Activated CD4-positive, alpha-beta memory T cell treated with anti-CD3 and anti-CD28 coated beads for 36 hours (primary cell): ENCODE measurements at regions of chr6 and their contacts with region 1.

Region 1: DNA sequence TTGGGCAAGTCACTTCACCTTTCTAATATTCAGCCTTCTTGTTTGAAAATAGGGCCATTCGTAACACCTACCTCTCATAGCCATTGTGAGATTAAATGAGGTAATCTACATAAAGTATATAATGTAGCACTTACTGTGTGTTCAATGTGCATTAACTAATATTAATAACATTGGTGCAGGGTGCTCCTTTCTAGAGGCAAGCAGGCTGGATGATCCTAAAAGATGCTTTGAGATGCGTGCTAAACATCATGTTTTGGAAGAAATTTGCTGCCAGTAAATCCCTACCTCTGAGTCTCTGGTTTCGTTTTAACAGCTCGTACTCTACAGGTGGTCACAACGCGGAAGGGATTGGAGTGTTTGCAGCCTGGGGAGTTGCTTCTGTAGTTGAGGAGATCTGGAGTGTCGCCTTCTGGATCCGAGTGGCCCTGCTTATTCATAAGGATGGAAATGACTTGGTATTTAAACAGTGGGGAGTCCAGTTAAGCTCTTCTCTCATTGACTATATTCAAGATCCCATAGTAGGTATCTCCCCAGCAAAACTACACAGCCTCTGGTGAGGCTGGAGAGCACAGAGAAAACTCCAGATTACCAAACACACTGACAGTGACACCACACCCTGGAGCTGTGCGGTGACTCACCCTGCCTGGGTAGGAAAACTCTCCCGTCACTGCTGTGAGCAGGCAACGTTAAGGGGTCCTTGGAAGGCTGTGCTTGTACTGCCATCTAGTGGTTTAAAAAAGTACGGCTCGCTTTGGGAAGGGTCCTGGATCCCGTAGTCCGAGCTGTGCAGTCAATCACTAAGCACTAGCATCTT is 107.9 kb downstream of the MAP3K7 start:
- DNase-seq: peak; percentile 91
- H3K4me3 Mint-ChIP-seq: peak overlapping the region; percentile 3
- H3K27ac Mint-ChIP-seq: peak overlapping the region; percentile 66
- H3K4me1 Mint-ChIP-seq: peaks cover 58% of the 10 kb centered on the region
- H3K27me3 Mint-ChIP-seq: no peaks in the 10 kb centered on the region

Region 2: DNA sequence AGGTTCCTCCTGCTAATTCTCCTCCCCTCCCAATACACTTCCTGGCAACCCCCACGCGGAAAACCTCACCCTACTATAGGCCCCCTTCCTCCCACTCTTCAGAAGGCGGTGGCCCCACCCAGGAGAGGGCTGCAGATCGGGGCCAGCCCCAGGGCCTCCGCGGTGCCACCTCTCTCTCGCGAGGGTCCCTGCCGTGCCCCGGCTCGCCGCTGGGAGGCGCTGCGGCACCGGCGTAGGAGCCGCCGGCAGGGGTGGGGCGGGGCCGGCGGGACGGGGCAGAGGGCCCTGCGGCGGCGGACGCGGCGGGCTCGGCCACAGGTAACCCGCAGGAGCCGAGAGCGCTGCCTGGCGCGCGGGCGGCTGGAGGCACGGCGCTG is 1046.1 kb before region 1 on chr6 and contains the start of gene ANKRD6:
- CTCF ChIA-PET with region 1: no interaction called
- POLR2A ChIA-PET with region 1: no interaction called
- intact Hi-C with region 1: loop called (anchors 10 kb)
- DNase-seq: peak; percentile 85
- H3K4me3 Mint-ChIP-seq: peak within 1 kb of the TSS; percentile 69
- H3K27ac Mint-ChIP-seq: peak within 1 kb of the TSS; percentile 30
- H3K4me1 Mint-ChIP-seq: peaks cover 21% of the 10 kb centered on the region
- H3K27me3 Mint-ChIP-seq: peaks cover 1% of the 10 kb centered on the region
- total RNA-seq, gene ANKRD6: 3.1 to 4.0 TPM

Region 3: GRCh38 chr6:89972025-89972381 is 507.0 kb before region 1 on chr6:
- CTCF ChIA-PET with region 1: interaction called, 10 read pairs
- POLR2A ChIA-PET with region 1: no interaction called
- intact Hi-C with region 1: no loop called
- DNase-seq: no peak
- H3K4me3 Mint-ChIP-seq: no peak overlapping the region
- H3K27ac Mint-ChIP-seq: peak overlapping the region; percentile 43
- H3K4me1 Mint-ChIP-seq: peaks cover 24% of the 10 kb centered on the region
- H3K27me3 Mint-ChIP-seq: no peaks in the 10 kb centered on the region

Region 4: DNA sequence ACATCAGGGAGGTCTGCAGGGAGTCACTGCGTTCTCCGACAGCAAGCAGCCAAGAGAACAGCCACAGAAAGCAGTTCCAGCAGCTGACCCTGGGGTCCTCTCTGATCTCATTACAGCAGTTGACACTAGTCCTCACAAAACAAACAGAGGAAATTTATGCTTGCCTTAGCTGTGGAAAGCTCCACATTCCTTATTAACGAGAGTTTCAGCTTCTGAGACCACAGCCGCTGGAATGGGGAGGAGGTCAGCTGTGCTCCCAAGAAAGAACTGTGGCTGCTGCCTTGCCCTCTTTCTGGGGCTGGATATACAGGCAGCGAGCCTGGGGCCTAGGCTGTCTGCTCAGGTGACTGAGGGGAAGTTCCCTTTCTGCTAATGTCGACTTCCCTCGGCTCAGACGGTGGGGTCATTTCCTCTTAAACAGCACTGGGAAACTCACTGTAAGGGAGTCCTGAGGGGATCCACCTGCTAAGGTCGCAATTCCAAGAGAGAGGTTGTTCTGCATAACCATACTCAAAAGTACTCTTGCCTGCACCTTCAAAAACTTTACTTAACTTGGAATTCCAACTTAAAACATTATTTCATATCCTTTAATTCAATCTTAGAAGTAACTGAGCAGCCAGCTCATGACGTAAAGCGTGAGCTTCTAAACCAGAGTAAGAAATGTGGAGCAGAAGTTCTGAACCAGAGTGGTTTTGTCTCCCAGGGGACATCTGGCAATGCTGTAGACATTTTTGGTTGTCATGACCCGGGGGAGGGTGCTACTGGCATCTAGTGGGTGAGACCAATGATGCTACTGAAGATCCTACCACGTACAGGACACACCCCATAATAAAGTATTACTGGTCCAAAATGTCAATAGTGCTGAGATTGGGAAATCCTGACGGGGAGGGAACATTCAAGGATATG is 262.7 kb before region 1 on chr6:
- CTCF ChIA-PET with region 1: interaction called, 17 read pairs
- POLR2A ChIA-PET with region 1: interaction called, 5 read pairs
- intact Hi-C with region 1: no loop called
- DNase-seq: peak; percentile 39
- H3K4me3 Mint-ChIP-seq: no peak overlapping the region
- H3K27ac Mint-ChIP-seq: peak overlapping the region; percentile 56
- H3K4me1 Mint-ChIP-seq: peaks cover 27% of the 10 kb centered on the region
- H3K27me3 Mint-ChIP-seq: no peaks in the 10 kb centered on the region

Region 5: DNA sequence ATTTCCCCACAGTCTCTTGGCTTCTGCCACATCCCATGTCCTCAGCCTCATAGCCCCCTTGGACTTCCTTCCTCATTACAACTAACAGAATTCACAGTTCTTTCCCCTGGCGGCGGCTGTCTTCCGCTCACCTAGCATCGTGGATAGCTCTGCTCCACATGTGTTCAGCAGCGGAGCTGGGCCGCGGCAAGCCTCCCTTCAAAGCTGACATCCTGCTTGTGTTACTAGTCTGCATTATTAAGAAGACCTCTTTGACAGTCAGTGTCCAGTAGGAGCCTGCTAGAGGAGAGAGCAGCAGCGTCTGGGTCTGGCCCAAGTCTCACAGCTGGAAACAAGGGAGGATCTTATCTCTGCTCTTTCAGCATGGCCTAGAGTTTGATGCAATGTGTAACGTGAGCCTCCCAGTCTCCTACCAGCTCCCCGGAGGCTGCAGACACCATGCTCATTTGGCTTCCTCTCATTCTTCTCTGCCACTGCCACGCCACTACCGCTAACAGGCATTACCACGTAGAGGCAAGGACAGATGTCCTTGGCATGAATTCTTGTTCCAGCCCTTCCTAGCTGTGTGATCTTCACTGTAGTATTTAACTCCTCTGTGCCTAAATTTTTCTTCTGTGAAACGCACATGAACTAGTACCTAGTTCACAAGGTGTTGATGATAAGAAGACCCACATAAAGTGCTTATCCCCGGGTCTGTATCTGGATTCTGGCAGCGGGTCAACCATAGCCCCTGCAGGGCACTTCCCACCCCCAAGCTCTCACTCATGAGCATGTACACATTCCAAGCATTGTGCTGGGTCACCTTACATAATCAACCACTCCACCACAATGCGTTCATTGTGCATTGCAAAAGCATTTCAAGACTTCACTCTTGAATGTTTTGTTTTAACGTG is 75.3 kb before region 1 on chr6:
- CTCF ChIA-PET with region 1: interaction called, 36 read pairs
- POLR2A ChIA-PET with region 1: interaction called, 63 read pairs
- intact Hi-C with region 1: no loop called
- DNase-seq: no peak
- H3K4me3 Mint-ChIP-seq: peak overlapping the region; percentile 64
- H3K27ac Mint-ChIP-seq: peak overlapping the region; percentile 93
- H3K4me1 Mint-ChIP-seq: peaks cover 81% of the 10 kb centered on the region
- H3K27me3 Mint-ChIP-seq: no peaks in the 10 kb centered on the region

Region 6: DNA sequence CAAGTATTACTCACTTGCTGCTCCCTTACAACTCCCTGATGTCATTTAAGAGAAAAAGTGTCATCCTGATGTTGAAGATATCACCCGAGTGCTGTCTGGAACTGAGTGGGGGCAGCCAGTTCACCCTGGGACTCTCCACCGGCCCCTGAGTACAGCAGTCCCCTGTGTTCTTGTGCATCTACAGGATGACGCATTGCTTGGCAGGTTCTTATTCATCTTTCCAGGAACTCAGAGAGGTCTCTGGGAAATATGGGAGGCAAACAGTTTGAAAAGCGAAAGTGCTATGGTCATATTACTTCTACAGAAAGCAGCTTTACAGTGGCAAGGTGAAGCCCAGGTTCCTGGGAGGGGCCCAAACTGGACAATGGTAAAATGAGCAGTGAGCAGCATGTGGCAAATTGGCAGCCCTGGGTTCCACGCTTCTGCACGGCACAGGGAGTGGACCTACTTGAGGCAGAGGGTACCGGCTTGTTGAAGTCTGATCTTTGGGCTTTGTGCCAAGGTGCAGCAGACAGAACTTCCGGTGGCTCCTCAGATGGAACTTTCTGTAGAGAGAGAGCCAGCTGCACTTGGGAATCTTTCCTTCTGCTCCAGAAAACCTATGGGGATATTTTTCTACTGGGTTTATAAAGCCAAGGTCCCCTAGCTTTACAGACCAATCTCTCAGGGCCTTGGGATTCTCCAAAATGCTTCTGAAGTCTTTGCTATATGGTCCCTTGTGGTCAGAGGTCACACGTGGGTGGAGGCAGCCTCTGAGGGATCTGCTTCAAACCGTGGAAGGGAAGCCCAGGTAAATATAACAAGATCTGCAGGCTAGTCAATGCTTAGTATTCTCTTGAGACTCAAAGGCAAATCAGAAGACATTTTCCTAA is 20.4 kb before region 1 on chr6:
- CTCF ChIA-PET with region 1: interaction called, 54 read pairs
- POLR2A ChIA-PET with region 1: interaction called, 7 read pairs
- intact Hi-C with region 1: no loop called
- DNase-seq: peak; percentile 94
- H3K4me3 Mint-ChIP-seq: peak overlapping the region; percentile 40
- H3K27ac Mint-ChIP-seq: peak overlapping the region; percentile 95
- H3K4me1 Mint-ChIP-seq: peaks cover 87% of the 10 kb centered on the region
- H3K27me3 Mint-ChIP-seq: no peaks in the 10 kb centered on the region

Region 7: DNA sequence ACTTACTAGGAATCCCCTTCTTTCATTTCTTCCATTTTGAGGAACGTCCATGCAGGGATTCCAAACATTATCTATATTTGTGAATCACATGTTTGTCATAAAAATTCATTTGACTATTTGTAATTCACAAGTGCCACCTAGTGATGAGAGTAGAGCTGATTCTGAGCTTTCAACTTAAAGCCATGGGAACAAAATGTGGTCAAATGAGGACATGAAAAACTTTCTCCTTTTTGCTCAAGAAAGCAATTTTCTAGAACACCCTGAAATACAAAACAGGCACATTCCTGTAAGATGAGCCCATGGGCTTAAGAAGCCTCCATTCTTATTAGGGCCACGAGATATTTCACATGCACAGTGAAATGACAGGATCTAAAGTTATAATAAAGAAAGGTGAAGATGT is 95.6 kb after region 1 on chr6:
- CTCF ChIA-PET with region 1: no interaction called
- POLR2A ChIA-PET with region 1: no interaction called
- intact Hi-C with region 1: no loop called
- DNase-seq: no peak
- H3K4me3 Mint-ChIP-seq: no peak overlapping the region
- H3K27ac Mint-ChIP-seq: no peak overlapping the region
- H3K4me1 Mint-ChIP-seq: peaks cover 5% of the 10 kb centered on the region
- H3K27me3 Mint-ChIP-seq: no peaks in the 10 kb centered on the region